ENCODE measurements at regions of chr18 and their contacts with region 1.

Region 1: DNA sequence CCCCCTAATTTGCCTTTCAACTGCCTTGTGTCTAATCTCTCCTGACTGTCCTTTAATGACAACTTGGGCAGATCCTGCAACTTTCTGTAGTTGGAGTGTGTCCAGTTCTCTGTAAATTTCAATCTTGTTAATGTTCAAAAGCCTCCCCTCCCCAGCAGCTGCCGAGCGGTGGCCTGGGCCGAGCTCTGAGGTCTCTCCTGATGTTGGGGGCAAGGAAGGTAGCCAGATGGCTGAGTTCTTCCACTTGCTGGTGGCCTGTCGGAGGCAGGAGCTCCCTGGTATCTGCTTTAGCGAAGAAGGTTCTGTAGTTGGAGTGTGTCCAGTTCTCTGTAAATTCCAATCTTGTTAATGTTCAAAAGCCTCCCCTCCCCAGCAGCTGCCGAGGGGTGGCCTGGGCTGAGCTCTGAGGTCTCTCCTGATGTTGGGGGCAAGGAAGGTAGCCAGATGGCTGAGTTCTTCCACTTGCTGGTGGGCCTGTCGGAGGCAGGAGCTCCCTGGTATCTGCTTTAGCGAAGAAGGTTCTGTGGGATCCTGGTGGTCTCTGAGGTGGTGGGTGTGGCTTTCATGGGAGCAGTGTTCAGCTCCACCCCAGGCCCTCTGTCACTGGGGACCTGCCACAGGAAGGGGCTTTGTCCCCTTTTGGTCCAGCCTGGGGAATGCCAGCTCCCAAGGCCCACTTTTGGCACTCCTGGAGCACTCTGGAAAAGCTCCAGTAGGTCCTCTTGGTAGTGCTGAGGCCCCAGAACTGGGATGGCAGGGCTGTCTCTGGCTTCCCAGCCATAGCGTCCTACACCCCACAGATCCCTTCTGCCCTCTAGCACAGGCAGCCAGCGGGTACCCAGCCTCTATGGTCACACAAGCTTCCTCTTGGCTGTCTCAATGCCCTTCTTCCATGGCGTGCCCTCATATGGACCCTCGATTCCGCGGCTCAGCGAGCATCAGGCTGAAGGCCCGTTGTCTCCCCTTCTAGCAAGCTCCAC is 211.9 kb downstream of the ALPK2 start:
- DNase-seq: no peak
- H3K4me3 ChIP-seq: no peak overlapping the region
- H3K27ac ChIP-seq: peak overlapping the region; percentile 60 to 82
- H3K4me1 ChIP-seq: peaks cover 0 to 8% of the 10 kb centered on the region in 2 donors
- H3K27me3 ChIP-seq: no peaks in the 10 kb centered on the region
- CTCF ChIP-seq: no peak
- POLR2A ChIP-seq: no peak

Region 2: GRCh38 chr18:56492136-56492535 is 1924.9 kb before region 1 on chr18:
- intact Hi-C with region 1: no loop called
- DNase-seq: no peak
- H3K4me3 ChIP-seq: no peak overlapping the region
- H3K27ac ChIP-seq: no peak overlapping the region
- H3K4me1 ChIP-seq: no peaks in the 10 kb centered on the region
- H3K27me3 ChIP-seq: no peaks in the 10 kb centered on the region
- CTCF ChIP-seq: no peak
- POLR2A ChIP-seq: no peak

Region 3: GRCh38 chr18:58452454-58453166 is 35.6 kb after region 1 on chr18:
- intact Hi-C with region 1: loop called (anchors 1 kb)
- DNase-seq: no peak
- H3K4me3 ChIP-seq: no peak overlapping the region
- H3K27ac ChIP-seq: no peak overlapping the region
- H3K4me1 ChIP-seq: peaks cover 3 to 8% of the 10 kb centered on the region in 2 donors
- H3K27me3 ChIP-seq: no peaks in the 10 kb centered on the region
- CTCF ChIP-seq: no peak
- POLR2A ChIP-seq: no peak

Region 4: DNA sequence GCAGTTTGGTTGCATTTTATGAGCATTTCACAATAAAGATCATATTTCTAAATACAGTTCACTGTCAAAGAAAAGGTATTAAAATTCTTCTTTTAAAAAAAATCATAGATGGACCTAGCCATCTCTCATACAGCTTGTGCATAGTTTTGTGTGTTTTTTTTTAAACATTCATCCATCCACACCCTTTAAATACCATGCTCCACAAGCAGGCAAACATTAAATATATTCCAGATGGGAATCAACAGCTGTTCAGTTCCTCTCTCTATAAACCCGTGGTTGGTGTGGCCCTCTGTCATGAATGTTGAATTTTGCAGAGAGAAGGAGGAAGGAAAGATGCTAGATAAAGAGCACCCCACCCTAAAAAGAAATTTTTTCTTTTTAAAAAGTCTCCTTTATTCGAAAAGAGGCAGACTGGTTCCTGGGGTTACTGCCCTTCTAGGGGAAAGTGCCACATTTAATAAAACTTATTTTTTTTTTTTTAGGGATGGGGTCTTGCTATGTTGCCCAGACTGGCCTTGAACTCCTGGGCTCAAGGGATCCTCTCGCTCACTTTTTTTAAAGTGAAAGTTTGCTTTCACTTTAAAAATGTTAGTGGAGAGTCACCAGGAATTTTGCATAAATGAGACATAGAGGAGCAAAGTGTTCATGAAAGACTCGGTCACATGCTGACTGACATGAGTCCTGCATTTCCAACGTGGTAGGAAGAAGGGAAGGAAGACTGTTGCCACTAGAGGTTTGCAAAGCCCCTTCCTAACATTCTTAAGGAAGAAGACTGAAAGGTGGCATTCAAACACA is 1016.0 kb after region 1 on chr18:
- intact Hi-C with region 1: loop called (anchors 10 kb)
- DNase-seq: no peak
- H3K4me3 ChIP-seq: no peak overlapping the region
- H3K27ac ChIP-seq: no peak overlapping the region
- H3K4me1 ChIP-seq: no peaks in the 10 kb centered on the region
- H3K27me3 ChIP-seq: no peaks in the 10 kb centered on the region
- CTCF ChIP-seq: no peak
- POLR2A ChIP-seq: no peak

Measured in breast epithelium (tissue), 4 donors.